ENCODE measurements at regions of chr7 and their contacts with region 1.

Region 1: DNA sequence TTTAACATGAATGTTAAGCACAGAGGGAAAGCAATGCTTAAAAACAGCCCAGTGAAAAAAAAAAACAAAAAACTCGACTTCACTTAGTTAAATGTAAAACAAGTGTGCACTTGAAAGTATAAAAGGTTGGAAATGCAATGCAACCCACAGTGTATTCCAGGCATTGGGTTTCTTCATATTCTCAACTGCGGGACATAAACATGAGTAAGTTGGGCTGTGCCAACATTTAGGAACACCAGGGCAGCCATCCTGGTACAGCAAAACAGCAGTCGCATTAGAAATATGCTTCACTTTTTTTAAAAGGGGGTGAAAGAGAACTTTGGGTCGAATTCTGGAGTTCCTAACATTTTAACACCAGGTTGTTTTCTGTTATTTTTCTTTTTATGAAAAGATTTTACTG is 937 bp downstream of the STEAP1 start:
- DNase-seq: peak; percentile 22
- H3K4me3 ChIP-seq: peak overlapping the region; percentile 26 to 77 (median 77)
- H3K27ac ChIP-seq: peak overlapping the region; percentile 53
- H3K4me1 ChIP-seq: peaks cover 37% of the 10 kb centered on the region
- H3K27me3 ChIP-seq: no peaks in the 10 kb centered on the region
- CTCF ChIP-seq: no peak
- POLR2A ChIP-seq: no peak

Region 2: GRCh38 chr7:90244909-90245851 is 90.0 kb after region 1 on chr7 and contains the start of gene CFAP69:
- CTCF ChIA-PET with region 1: interaction called, 7 read pairs
- POLR2A ChIA-PET with region 1: no interaction called
- dilution Hi-C with region 1: no loop called
- intact Hi-C with region 1: loop called (anchors 1 kb)
- DNase-seq: peak; percentile 86
- H3K4me3 ChIP-seq: peak within 1 kb of the TSS; percentile 45 to 74 (median 57)
- H3K27ac ChIP-seq: peak within 1 kb of the TSS; percentile 13
- H3K4me1 ChIP-seq: peaks cover 9% of the 10 kb centered on the region
- H3K27me3 ChIP-seq: no peaks in the 10 kb centered on the region
- CTCF ChIP-seq: peak; percentile 4 to 49
- POLR2A ChIP-seq: no peak
- total RNA-seq, gene CFAP69: 2.9 and 4.4 TPM in 2 replicates

Region 3: GRCh38 chr7:90298145-90299038 is 143.2 kb after region 1 on chr7:
- CTCF ChIA-PET with region 1: interaction called, 13 read pairs
- POLR2A ChIA-PET with region 1: no interaction called
- dilution Hi-C with region 1: no loop called
- intact Hi-C with region 1: loop called (anchors 1 kb)
- DNase-seq: peak; percentile 66
- H3K4me3 ChIP-seq: no peak overlapping the region
- H3K27ac ChIP-seq: no peak overlapping the region
- H3K4me1 ChIP-seq: no peaks in the 10 kb centered on the region
- H3K27me3 ChIP-seq: no peaks in the 10 kb centered on the region
- CTCF ChIP-seq: peak; percentile 48 to 65
- POLR2A ChIP-seq: no peak

Region 4: DNA sequence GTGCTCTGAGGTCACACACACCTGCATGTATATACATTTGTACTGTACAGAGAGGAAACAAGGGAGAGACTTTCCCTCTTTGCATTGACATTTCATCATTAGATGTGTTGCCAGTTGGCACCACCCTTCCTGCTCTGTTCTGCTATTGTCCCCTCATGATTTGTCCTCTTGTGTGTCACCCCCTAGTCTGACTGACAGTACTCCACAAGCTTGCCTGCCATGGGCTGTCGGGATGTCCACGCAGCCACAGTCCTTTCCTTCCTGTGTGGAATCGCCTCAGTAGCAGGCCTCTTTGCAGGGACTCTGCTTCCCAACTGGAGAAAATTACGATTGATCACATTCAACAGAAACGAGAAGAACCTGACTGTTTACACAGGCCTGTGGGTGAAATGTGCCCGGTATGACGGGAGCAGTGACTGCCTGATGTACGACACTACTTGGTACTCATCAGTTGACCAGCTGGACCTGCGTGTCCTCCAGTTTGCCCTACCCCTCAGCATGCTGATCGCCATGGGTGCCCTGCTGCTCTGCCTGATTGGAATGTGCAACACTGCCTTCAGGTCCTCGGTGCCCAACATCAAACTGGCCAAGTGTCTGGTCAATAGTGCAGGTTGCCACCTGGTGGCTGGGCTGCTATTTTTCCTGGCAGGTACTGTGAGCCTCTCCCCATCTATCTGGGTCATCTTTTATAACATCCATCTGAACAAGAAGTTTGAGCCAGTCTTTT is 257.4 kb after region 1 on chr7:
- CTCF ChIA-PET with region 1: interaction called, 4 read pairs
- POLR2A ChIA-PET with region 1: no interaction called
- dilution Hi-C with region 1: no loop called
- intact Hi-C with region 1: loop called (anchors 1 kb)
- DNase-seq: no peak
- H3K4me3 ChIP-seq: no peak overlapping the region
- H3K27ac ChIP-seq: no peak overlapping the region
- H3K4me1 ChIP-seq: peaks cover 11% of the 10 kb centered on the region
- H3K27me3 ChIP-seq: peaks cover 4 to 13% of the 10 kb centered on the region in 2 experiments
- CTCF ChIP-seq: peak in 1 of 2 donors; percentile 31
- POLR2A ChIP-seq: no peak

Region 5: GRCh38 chr7:90530263-90530662 is 375.1 kb after region 1 on chr7:
- CTCF ChIA-PET with region 1: no interaction called
- POLR2A ChIA-PET with region 1: no interaction called
- dilution Hi-C with region 1: no loop called
- intact Hi-C with region 1: no loop called
- DNase-seq: no peak
- H3K4me3 ChIP-seq: no peak overlapping the region
- H3K27ac ChIP-seq: no peak overlapping the region
- H3K4me1 ChIP-seq: no peaks in the 10 kb centered on the region
- H3K27me3 ChIP-seq: peaks cover 5 to 8% of the 10 kb centered on the region in 2 experiments
- CTCF ChIP-seq: no peak
- POLR2A ChIP-seq: no peak